Activated CD8-positive, alpha-beta T cell treated with anti-CD3 and anti-CD28 coated beads, Interleukin-2, amount 10 ng/mL, durations not matched to agents 7 days and 5 days (primary cell): ENCODE measurements at regions of chr20 and their contacts with region 1.

Region 1: DNA sequence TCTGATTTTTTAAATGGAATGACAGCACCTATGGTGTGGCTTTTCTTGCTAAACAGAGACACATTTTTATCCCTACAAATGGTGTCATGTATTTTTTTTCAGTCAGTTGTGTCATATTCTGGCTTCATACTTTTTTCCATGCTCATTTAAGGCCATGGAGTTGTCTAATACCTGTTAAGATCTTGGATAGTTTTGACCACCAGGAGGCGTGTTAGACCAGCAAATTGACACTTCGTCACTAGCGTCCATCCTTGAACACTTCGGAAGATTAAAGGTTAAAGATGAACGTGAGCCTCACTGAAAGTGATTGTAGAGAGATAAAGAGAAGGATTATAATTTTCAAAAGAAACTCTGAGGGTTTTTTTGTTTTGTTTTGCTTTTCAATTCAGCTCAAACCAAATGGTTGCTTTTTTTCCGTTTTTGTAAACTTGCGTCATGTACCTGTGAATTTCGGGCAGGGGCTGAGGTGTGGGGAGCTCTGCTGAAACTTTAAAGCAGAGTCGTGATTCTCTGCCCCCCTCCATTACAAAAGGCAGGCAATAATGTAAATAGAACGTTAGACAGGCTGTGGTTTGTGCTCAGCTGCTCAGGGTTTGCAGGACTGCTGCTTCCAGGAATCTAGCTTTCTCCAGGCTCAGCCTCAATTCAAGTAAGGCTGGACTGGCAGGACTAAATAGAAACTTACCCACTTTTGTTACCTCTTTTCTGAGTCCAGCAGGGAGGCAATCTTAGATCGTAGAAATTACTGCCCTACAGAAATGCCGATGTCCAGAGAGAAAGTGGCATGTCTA is 245.1 kb downstream of the FOXA2 start:
- DNase-seq: peak; percentile 62
- ATAC-seq: no peak
- H3K4me3 Mint-ChIP-seq: no peak overlapping the region
- H3K27ac Mint-ChIP-seq: no peak overlapping the region
- H3K4me1 Mint-ChIP-seq: peaks cover 1% of the 10 kb centered on the region
- H3K27me3 Mint-ChIP-seq: peaks cover 2% of the 10 kb centered on the region

Region 2: GRCh38 chr20:22523499-22524392 is 184.5 kb after region 1 on chr20:
- CTCF ChIA-PET with region 1: no interaction called
- POLR2A ChIA-PET with region 1: no interaction called
- DNase-seq: no peak
- ATAC-seq: no peak
- H3K4me3 Mint-ChIP-seq: no peak overlapping the region
- H3K27ac Mint-ChIP-seq: no peak overlapping the region
- H3K4me1 Mint-ChIP-seq: no peaks in the 10 kb centered on the region
- H3K27me3 Mint-ChIP-seq: no peaks in the 10 kb centered on the region

Region 3: DNA sequence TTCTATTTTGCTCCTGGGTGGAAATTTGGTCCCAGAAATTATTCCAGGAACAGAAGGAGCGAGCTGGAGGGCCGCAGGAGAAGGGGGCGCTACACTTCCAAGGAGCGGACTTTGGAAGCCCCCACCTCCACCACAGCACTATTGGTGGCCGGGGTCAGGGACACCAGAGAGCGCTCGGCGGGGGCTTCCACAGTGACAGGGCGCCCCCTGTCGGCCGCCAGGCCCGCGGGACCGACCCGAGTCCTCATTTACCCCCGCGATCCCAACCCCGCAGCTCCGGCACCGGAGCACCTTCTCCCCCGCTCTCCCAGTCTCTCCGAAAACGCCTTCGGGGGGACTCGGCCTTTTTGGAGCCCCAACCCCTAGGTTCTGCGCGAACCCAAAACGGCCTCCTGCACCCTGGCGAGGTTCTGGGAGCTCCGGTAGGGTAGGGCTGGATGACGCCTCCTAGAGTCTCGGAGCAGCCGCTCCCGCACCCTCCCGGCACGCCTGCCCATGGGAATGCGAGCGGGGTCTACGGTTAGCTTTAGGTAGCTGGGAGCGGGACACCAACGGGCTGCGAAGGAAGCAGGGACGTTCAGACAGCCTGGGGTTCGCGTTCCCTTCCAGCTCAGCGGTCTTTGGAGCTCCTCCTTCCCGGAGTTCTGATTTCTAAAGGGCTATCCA is 247.5 kb after region 1 on chr20:
- CTCF ChIA-PET with region 1: interaction called, 20 read pairs
- POLR2A ChIA-PET with region 1: no interaction called
- DNase-seq: no peak
- ATAC-seq: no peak
- H3K4me3 Mint-ChIP-seq: no peak overlapping the region
- H3K27ac Mint-ChIP-seq: no peak overlapping the region
- H3K4me1 Mint-ChIP-seq: peaks cover 1% of the 10 kb centered on the region
- H3K27me3 Mint-ChIP-seq: peaks cover 55% of the 10 kb centered on the region

Region 4: DNA sequence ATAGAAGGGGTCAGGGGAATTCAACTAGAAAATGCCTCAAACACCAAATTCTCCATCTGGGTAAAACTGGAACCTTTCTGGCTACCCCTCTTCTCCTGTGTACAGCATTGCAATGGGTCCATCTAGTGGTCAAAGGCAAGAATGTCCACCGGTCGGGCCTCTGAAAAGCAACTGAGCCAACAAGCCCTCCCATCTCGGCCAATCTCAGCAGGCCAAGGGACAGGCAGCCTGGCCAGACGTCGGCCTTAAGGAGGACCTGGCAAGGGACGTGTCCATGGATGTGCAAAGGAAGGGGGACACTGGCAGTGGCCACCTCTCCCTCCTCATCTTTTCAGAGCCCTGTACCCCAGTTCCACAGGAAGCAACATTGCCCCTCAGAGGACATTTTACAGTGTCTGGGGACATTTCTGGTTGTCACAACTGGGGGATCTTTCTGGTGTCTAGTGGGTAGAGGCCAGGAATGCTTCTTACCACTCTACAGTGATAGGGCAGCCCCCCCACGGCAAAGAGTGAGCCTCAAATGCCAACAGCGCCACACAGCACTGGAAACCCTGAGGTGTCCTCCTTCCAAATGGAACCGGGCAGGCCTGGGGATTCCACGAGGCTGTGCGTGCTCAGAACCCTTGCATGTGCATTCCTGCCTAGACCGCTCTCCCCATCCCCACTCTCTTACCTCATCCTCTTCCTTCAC is 344.9 kb after region 1 on chr20:
- CTCF ChIA-PET with region 1: interaction called, 28 read pairs
- POLR2A ChIA-PET with region 1: no interaction called
- DNase-seq: peak; percentile 55
- ATAC-seq: peak; percentile 60
- H3K4me3 Mint-ChIP-seq: no peak overlapping the region
- H3K27ac Mint-ChIP-seq: no peak overlapping the region
- H3K4me1 Mint-ChIP-seq: peaks cover 2% of the 10 kb centered on the region
- H3K27me3 Mint-ChIP-seq: no peaks in the 10 kb centered on the region

Region 5: DNA sequence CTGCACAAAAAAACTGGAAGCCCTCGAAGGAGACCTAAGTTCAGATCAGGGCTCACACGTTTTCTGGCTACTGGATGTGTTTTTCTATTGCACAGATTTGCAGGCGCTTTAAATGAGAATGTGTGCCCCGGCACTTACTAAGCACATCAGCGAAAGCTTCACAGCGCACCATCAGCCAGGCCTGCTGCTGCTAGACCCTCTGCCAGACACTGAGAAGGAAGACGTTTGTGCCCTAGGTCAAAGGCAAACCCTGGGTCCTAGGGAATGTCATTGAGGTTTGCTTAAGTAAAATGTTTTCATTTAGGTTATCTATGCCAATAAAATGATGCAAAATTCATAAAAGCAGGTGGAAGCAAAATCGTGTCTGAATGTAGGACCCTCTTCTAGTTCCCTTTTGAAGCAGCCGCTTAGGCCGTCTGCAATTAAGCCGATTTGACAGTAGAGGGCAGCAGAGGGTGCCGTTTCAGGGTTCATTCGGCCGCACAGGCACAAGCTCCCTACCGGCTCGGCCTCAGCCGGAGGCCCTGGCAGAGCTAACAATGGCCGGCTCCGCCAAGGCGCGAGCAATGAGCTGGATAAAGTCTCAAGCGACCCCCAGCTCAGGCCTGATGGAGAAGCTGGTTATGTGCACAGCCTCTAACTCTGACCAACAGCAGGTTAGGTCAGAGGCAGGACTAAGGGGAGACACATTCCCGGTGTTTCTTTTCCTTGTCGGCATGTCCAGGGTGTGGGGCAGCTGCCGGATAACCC is 352.3 kb after region 1 on chr20:
- CTCF ChIA-PET with region 1: interaction called, 16 read pairs
- POLR2A ChIA-PET with region 1: no interaction called
- DNase-seq: peak; percentile 70
- ATAC-seq: peak; percentile 76
- H3K4me3 Mint-ChIP-seq: no peak overlapping the region
- H3K27ac Mint-ChIP-seq: no peak overlapping the region
- H3K4me1 Mint-ChIP-seq: no peaks in the 10 kb centered on the region
- H3K27me3 Mint-ChIP-seq: no peaks in the 10 kb centered on the region